ENCODE measurements at regions of chr14 and their contacts with region 1.

Region 1: GRCh38 chr14:61025251-61026223 is 44.5 kb downstream of the SLC38A6 start:
- DNase-seq: peak; percentile 59
- H3K4me3 Mint-ChIP-seq: no peak overlapping the region
- H3K27ac Mint-ChIP-seq: no peak overlapping the region
- H3K4me1 Mint-ChIP-seq: no peaks in the 10 kb centered on the region
- H3K27me3 Mint-ChIP-seq: no peaks in the 10 kb centered on the region
- CTCF ChIP-seq: peak; percentile 56

Region 2: DNA sequence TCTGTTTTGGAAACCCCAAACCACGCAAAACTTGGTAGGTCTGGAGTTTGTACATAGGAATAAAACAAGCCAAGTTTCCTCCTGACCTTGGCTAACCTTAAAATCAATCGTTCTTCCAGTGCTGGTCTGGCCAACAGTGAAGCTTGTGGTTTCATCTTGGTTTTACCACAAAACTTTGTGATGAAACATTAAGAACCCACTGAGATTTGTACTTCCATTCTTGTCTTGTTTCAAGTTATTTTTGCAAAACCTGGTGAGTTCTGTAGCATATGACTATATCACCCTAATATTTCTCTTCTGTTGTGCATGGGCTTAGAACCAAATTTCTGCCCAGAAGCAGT is 402.6 kb before region 1 on chr14:
- CTCF ChIA-PET with region 1: interaction called, 8 read pairs
- intact Hi-C with region 1: loop called (anchors 1 kb)
- DNase-seq: no peak
- H3K4me3 Mint-ChIP-seq: no peak overlapping the region
- H3K27ac Mint-ChIP-seq: no peak overlapping the region
- H3K4me1 Mint-ChIP-seq: peaks cover 26% of the 10 kb centered on the region
- H3K27me3 Mint-ChIP-seq: no peaks in the 10 kb centered on the region
- CTCF ChIP-seq: no peak

Region 3: DNA sequence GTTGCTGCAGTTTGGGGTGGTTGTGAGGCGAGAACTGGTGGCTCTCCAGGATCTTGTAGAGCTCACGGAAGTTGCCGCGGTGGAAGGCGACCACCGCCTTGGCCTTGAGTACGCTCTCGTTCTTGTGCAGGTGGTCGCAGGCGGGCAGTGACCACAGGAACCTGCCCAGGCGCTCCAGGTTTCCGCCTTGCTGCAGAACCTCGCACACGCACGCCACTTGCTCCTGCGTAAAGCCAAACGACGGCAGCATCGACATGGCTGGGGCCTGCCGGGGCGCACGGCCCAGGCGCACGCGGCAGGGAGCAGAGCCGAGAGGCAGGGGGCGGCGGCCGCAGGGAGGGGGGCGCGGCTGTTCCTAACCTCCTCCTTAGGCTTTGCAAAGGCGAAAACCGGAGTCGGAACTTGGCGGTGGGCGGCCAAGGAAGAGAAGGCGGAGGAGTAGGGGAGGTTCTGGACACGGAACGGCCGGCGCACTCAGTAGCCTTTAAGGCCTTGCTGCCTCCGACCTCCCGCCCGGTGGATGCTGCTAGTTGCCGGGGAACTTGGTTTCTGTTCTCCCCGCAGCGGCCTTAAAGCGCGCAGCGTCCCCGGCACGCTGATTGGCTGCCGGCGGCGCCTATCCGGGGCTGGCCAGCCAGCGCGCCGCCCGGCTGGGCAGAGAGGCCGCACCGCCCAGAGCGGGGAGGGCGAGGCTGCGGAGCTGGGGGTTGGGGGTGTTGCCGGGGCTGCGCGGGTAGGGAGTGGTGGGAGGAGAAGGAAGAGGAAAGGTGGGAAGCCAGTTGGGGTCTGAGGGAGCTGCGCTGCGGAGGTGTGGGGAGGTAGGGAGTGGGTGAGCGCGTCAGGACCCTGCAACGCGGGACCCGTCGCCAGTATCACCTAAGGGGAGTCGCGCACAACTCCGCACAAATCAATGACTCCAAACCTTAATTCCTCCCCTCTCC is 376.3 kb before region 1 on chr14 and contains the start of gene SIX1:
- CTCF ChIA-PET with region 1: no interaction called
- intact Hi-C with region 1: loop called (anchors 5 kb)
- DNase-seq: peak; percentile 86
- H3K4me3 Mint-ChIP-seq: peak within 1 kb of the TSS; percentile 75
- H3K27ac Mint-ChIP-seq: peak within 1 kb of the TSS; percentile 6
- H3K4me1 Mint-ChIP-seq: peaks cover 18% of the 10 kb centered on the region
- H3K27me3 Mint-ChIP-seq: peaks cover 49% of the 10 kb centered on the region
- CTCF ChIP-seq: no peak
- total RNA-seq, gene SIX1: 4.6 and 6.7 TPM in 2 replicates

Region 4: GRCh38 chr14:61051051-61051450 is 25.5 kb after region 1 on chr14:
- CTCF ChIA-PET with region 1: no interaction called
- intact Hi-C with region 1: no loop called
- DNase-seq: no peak
- H3K4me3 Mint-ChIP-seq: no peak overlapping the region
- H3K27ac Mint-ChIP-seq: no peak overlapping the region
- H3K4me1 Mint-ChIP-seq: no peaks in the 10 kb centered on the region
- H3K27me3 Mint-ChIP-seq: no peaks in the 10 kb centered on the region
- CTCF ChIP-seq: no peak

Region 5: GRCh38 chr14:61196792-61197191 is 171.3 kb after region 1 on chr14:
- CTCF ChIA-PET with region 1: no interaction called
- intact Hi-C with region 1: loop called (anchors 5 kb)
- DNase-seq: peak; percentile 4
- H3K4me3 Mint-ChIP-seq: no peak overlapping the region
- H3K27ac Mint-ChIP-seq: no peak overlapping the region
- H3K4me1 Mint-ChIP-seq: no peaks in the 10 kb centered on the region
- H3K27me3 Mint-ChIP-seq: no peaks in the 10 kb centered on the region
- CTCF ChIP-seq: no peak

Region 6: GRCh38 chr14:61258985-61259384 is 233.4 kb after region 1 on chr14:
- CTCF ChIA-PET with region 1: no interaction called
- intact Hi-C with region 1: loop called (anchors 5 kb)
- DNase-seq: no peak
- H3K4me3 Mint-ChIP-seq: no peak overlapping the region
- H3K27ac Mint-ChIP-seq: no peak overlapping the region
- H3K4me1 Mint-ChIP-seq: peaks cover 7% of the 10 kb centered on the region
- H3K27me3 Mint-ChIP-seq: no peaks in the 10 kb centered on the region
- CTCF ChIP-seq: no peak

Measured in Calu3 (cell line).